ENCODE measurements at regions of chr3 and their contacts with region 1.

Region 1: DNA sequence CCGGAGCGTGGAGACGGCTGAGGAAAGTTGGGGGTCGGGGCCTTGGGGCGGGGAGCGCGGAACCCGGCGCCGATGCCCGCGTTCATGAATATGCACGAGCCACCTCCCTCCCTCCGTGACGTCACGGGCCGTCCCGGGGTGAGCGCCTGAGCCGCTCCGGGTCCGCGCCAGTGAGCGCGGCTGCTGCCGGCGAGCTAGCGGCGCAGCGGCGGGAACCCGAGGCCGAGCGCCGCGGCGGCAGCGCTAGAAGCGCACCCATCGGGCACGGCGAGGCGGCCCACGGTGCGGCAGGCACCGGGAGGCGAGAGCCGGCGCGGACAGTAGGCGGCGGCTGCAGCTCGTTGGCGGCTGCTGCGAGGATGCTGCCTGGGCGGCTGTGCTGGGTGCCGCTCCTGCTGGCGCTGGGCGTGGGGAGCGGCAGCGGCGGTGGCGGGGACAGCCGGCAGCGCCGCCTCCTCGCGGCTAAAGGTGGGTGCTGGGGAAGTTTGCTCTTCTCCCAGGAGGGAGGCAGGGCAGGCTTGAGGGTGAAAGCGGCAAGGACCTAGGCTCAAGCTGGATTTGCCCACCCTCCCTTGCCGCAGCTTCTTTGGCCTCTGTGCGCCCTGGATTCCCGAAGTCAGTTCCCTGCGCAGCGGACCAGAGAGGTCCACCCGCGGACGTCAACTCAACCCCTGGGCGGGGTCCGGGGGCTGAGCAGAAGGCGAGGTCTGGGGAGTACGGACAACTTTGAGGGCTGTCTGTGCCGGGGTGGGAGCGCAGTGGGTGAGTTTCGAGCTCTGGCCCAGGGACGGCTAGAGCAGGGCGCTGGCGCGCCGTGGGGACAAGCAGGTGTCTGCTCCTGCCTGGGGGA is at the start of gene CLSTN2:
- DNase-seq: peak; percentile 30 to 86 (median 80)
- H3K4me3 ChIP-seq: peak within 1 kb of the TSS; percentile 53 to 86 (median 71)
- H3K27ac ChIP-seq: peak within 1 kb of the TSS in 53 of 59 donors; percentile 12 to 85 (median 71)
- H3K27me3 ChIP-seq: peaks cover 0 to 9% (median 0%) of the 10 kb centered on the region in 45 donors
- CTCF ChIP-seq: peak in 15 of 56 donors; percentile 1 to 40 (median 22)
- total RNA-seq, gene CLSTN2: 27.9 to 162 (median 90.9) TPM

Region 2: DNA sequence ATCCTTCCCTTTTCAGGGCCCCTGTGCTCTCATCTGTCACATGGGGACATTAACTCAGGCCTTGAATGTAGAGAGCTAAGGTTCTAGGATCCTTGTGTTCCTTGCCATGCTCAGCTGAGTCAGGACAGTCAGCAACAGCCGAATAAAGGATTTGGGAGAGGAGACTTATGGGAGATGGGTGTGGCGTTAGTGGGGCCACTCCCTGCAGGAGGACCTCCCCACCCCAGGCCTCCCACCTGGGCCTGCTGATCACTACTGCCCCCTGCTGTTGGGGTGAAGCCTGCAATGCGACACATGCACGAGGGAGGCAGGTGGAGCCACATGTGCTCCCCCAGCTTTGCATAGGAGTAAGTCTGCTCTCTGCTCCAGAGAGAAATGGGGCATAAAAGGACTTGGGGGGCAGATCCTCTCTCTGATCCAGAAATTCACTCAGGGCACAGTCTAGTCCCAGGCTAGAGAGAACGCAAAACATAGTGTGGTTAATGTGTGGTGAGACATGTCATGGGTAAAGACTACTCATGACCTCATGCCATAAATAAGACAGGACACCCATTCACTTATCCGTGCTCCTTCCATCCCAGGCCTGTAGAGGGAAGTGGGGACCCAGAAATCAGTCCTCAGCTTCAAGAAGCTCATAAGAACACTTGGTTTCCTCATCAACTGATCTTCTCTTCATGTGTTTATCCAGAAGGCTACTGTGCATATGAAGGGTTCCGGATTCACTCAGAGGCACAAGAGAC is 415.1 kb before region 1 on chr3:
- intact Hi-C with region 1: loop called (anchors 10 kb)
- DNase-seq: no peak
- H3K4me3 ChIP-seq: no peak overlapping the region
- H3K27ac ChIP-seq: no peak overlapping the region
- H3K27me3 ChIP-seq: no peaks in the 10 kb centered on the region
- CTCF ChIP-seq: peak in 47 of 56 donors; percentile 5 to 58 (median 32)

Region 3: DNA sequence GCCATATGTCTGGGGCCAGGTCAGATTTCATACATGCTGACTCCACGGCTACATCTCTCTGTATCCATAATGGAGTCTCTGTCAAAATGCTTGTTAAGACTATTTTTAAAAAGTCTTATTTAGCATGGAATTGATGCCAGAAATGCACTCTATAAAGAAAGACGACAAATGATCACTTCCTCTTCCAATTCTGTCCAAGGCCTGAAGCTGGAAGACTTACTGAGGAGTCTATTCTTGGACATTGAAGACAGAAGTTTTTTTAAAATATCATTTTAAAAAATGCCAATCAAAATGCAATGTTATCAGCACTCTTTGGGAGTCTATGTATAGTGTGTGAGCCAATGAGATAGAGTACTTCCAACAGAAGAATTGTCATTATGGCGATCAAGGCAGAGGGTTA is 229.6 kb before region 1 on chr3:
- intact Hi-C with region 1: no loop called
- DNase-seq: no peak
- H3K4me3 ChIP-seq: no peak overlapping the region
- H3K27ac ChIP-seq: peak overlapping the region in 3 of 59 donors; percentile 3 to 35 (median 9)
- H3K27me3 ChIP-seq: no peaks in the 10 kb centered on the region
- CTCF ChIP-seq: no peak

Region 4: GRCh38 chr3:139718415-139718814 is 216.8 kb before region 1 on chr3:
- intact Hi-C with region 1: loop called in 1 of 2 experiments (anchors 5 kb)
- DNase-seq: peak in 6 of 10 donors; percentile 5 to 50 (median 38)
- H3K4me3 ChIP-seq: no peak overlapping the region
- H3K27ac ChIP-seq: no peak overlapping the region
- H3K27me3 ChIP-seq: no peaks in the 10 kb centered on the region
- CTCF ChIP-seq: peak in 53 of 56 donors; percentile 9 to 58 (median 43)

Region 5: GRCh38 chr3:140051019-140051957 is 116.0 kb after region 1 on chr3:
- intact Hi-C with region 1: loop called (anchors 1 to 5 kb)
- DNase-seq: peak in 9 of 10 donors; percentile 16 to 70 (median 53)
- H3K4me3 ChIP-seq: no peak overlapping the region
- H3K27ac ChIP-seq: no peak overlapping the region
- H3K27me3 ChIP-seq: no peaks in the 10 kb centered on the region
- CTCF ChIP-seq: peak; percentile 10 to 84 (median 62)

Region 6: DNA sequence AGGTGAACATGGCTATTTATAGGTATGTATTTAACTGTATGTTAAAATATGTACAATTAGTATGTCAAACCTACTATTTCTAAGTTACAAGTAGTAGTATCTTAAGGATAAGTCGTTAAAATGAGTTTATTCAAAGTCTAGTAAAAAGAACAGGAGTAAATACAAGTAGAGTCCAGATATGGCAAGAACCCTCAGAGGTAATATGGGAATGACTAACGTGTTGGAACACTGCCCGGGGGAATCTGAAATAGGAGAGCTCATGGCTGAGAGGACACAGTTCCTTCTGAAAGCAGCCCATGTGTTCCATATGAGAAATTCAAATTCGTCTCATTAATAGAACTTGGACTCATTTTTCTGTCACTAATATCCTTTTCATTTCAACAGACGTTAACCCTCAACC is 158.5 kb after region 1 on chr3:
- intact Hi-C with region 1: no loop called
- DNase-seq: peak in 4 of 10 donors; percentile 12 to 70 (median 48)
- H3K4me3 ChIP-seq: no peak overlapping the region
- H3K27ac ChIP-seq: no peak overlapping the region
- H3K27me3 ChIP-seq: no peaks in the 10 kb centered on the region
- CTCF ChIP-seq: no peak